ENCODE measurements at regions of chr6 and their contacts with region 1.

Region 1: GRCh38 chr6:165884813-165885765 is 222.0 kb upstream of the PDE10A start:
- DNase-seq: peak; percentile 70 to 78
- H3K4me3 ChIP-seq: no peak overlapping the region
- H3K4me3 Mint-ChIP-seq: no peak overlapping the region
- H3K27ac Mint-ChIP-seq: no peak overlapping the region
- H3K4me1 ChIP-seq: no peaks in the 10 kb centered on the region
- H3K4me1 Mint-ChIP-seq: no peaks in the 10 kb centered on the region
- H3K27me3 ChIP-seq: no peaks in the 10 kb centered on the region; the same call in 1 of the 2 replicates
- H3K27me3 Mint-ChIP-seq: peaks cover 11% of the 10 kb centered on the region
- CTCF ChIP-seq: peak; percentile 81 to 90

Region 2: GRCh38 chr6:165562421-165563090 is 322.5 kb before region 1 on chr6:
- CTCF ChIA-PET with region 1: no interaction called
- POLR2A ChIA-PET with region 1: no interaction called
- intact Hi-C with region 1: no loop called
- DNase-seq: peak in 1 of 2 experiments; percentile 9
- H3K4me3 ChIP-seq: no peak overlapping the region
- H3K4me3 Mint-ChIP-seq: no peak overlapping the region
- H3K27ac Mint-ChIP-seq: no peak overlapping the region
- H3K4me1 ChIP-seq: no peaks in the 10 kb centered on the region
- H3K4me1 Mint-ChIP-seq: no peaks in the 10 kb centered on the region
- H3K27me3 ChIP-seq: no peaks in the 10 kb centered on the region
- H3K27me3 Mint-ChIP-seq: no peaks in the 10 kb centered on the region
- CTCF ChIP-seq: no peak

Region 3: GRCh38 chr6:165931675-165932074 is 46.6 kb after region 1 on chr6:
- CTCF ChIA-PET with region 1: no interaction called
- POLR2A ChIA-PET with region 1: no interaction called
- intact Hi-C with region 1: no loop called
- DNase-seq: no peak
- H3K4me3 ChIP-seq: no peak overlapping the region
- H3K4me3 Mint-ChIP-seq: no peak overlapping the region
- H3K27ac Mint-ChIP-seq: no peak overlapping the region
- H3K4me1 ChIP-seq: no peaks in the 10 kb centered on the region
- H3K4me1 Mint-ChIP-seq: no peaks in the 10 kb centered on the region
- H3K27me3 ChIP-seq: no peaks in the 10 kb centered on the region
- H3K27me3 Mint-ChIP-seq: peaks cover 25% of the 10 kb centered on the region
- CTCF ChIP-seq: no peak

Region 4: GRCh38 chr6:166106076-166106686 is 221.1 kb after region 1 on chr6:
- CTCF ChIA-PET with region 1: interaction called, 24 read pairs
- POLR2A ChIA-PET with region 1: no interaction called
- intact Hi-C with region 1: loop called (anchors 1 kb)
- DNase-seq: peak; percentile 68 to 72
- H3K4me3 ChIP-seq: no peak overlapping the region
- H3K4me3 Mint-ChIP-seq: no peak overlapping the region
- H3K27ac Mint-ChIP-seq: no peak overlapping the region
- H3K4me1 ChIP-seq: no peaks in the 10 kb centered on the region
- H3K4me1 Mint-ChIP-seq: no peaks in the 10 kb centered on the region
- H3K27me3 ChIP-seq: no peaks in the 10 kb centered on the region
- H3K27me3 Mint-ChIP-seq: peaks cover 28% of the 10 kb centered on the region
- CTCF ChIP-seq: peak; percentile 74 to 85

Measured in Caco-2 (cell line).